Heart left ventricle (tissue), 16 donors: ENCODE measurements at regions of chrX and their contacts with region 1.

Region 1: GRCh38 chrX:19904778-19905367 is 17.5 kb upstream of the SH3KBP1 start:
- DNase-seq: peak in 1 of 5 donors; percentile 25
- ATAC-seq: peak in 3 of 4 donors; percentile 38 to 46 (median 44)
- H3K4me3 ChIP-seq: no peak overlapping the region
- H3K27ac ChIP-seq: no peak overlapping the region
- H3K4me1 ChIP-seq: no peaks in the 10 kb centered on the region
- H3K27me3 ChIP-seq: no peaks in the 10 kb centered on the region
- CTCF ChIP-seq: peak; percentile 48 to 70 (median 59)
- POLR2A ChIP-seq: no peak

Region 2: DNA sequence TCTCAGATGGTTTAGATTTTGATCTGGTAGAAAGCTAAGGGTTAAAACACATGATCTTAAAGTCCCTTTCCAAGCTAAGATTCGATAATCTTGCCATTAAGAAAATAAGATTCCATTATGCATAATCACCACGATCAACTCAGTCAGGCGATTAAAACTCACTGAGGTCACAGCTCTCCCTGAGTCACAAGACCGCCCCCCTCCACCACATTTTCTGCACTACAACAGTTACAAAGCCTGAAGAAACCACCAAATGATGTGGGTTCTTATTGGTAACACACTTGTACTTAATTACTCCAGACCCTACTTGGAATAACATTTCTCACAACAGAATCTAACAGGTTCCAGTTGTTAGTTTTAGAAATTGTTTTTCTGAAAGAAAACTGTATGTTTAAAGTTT is 80.3 kb before region 1 on chrX:
- intact Hi-C with region 1: no loop called
- DNase-seq: no peak
- ATAC-seq: no peak
- H3K4me3 ChIP-seq: no peak overlapping the region
- H3K27ac ChIP-seq: no peak overlapping the region
- H3K4me1 ChIP-seq: peaks cover 0 to 8% (median 0%) of the 10 kb centered on the region in 12 donors
- H3K27me3 ChIP-seq: no peaks in the 10 kb centered on the region
- CTCF ChIP-seq: no peak
- POLR2A ChIP-seq: no peak

Region 3: GRCh38 chrX:19990556-19991349 is 85.9 kb after region 1 on chrX and contains the start of gene BCLAF3:
- intact Hi-C with region 1: loop called in 9 of 10 experiments (anchors 2 to 10 kb)
- DNase-seq: peak; percentile 90 to 95 (median 90)
- ATAC-seq: peak; percentile 99 to 100 (median 100)
- H3K4me3 ChIP-seq: peak within 1 kb of the TSS; percentile 52 to 90 (median 77)
- H3K27ac ChIP-seq: peak within 1 kb of the TSS in 11 of 12 donors; percentile 44 to 80 (median 66)
- H3K4me1 ChIP-seq: peaks cover 0 to 12% (median 0%) of the 10 kb centered on the region in 12 donors
- H3K27me3 ChIP-seq: no peaks in the 10 kb centered on the region
- CTCF ChIP-seq: peak; percentile 65 to 86 (median 77)
- POLR2A ChIP-seq: no peak
- total RNA-seq, gene BCLAF3: 2.4 to 10.6 (median 7.8) TPM

Region 4: GRCh38 chrX:20066968-20067708 is 162.3 kb after region 1 on chrX:
- intact Hi-C with region 1: loop called in 4 of 10 experiments (anchors 10 kb)
- DNase-seq: no peak
- ATAC-seq: peak in 3 of 4 donors; percentile 29 to 61 (median 30)
- H3K4me3 ChIP-seq: no peak overlapping the region
- H3K27ac ChIP-seq: peak overlapping the region in 1 of 12 donors; percentile 15
- H3K4me1 ChIP-seq: peaks cover 0 to 11% (median 0%) of the 10 kb centered on the region in 12 donors
- H3K27me3 ChIP-seq: peaks cover 0 to 13% (median 0%) of the 10 kb centered on the region in 9 donors
- CTCF ChIP-seq: peak in 7 of 12 donors; percentile 7 to 35 (median 22)
- POLR2A ChIP-seq: no peak

Region 5: DNA sequence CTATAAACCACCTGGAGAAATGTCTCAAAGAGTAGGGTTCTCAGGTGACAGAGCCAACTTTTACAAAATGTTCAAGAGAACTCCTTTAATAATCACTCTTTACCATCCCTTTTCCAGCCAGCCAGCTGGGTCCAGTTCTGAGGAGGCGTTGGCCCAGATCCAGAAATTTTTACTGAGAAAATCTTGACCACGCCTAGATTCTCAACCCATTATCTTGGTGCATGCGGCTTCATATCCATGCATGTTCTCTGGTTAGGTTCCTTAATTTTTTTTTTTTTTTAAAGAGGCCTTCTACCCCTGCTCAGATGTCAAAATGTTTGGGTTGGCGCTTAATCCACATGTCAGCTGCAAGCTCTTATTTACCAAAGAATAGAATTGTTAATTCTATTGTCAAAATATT is 223.8 kb after region 1 on chrX:
- intact Hi-C with region 1: loop called in 9 of 10 experiments (anchors 5 to 10 kb)
- DNase-seq: no peak
- ATAC-seq: peak in 1 of 4 donors; percentile 49
- H3K4me3 ChIP-seq: no peak overlapping the region
- H3K27ac ChIP-seq: no peak overlapping the region
- H3K4me1 ChIP-seq: peaks cover 0 to 8% (median 0%) of the 10 kb centered on the region in 12 donors
- H3K27me3 ChIP-seq: no peaks in the 10 kb centered on the region
- CTCF ChIP-seq: no peak
- POLR2A ChIP-seq: no peak

Region 6: GRCh38 chrX:20141281-20142220 is 236.7 kb after region 1 on chrX and contains the start of gene EIF1AX:
- intact Hi-C with region 1: loop called in 1 of 10 experiments (anchors 10 kb)
- DNase-seq: peak; percentile 95 to 99 (median 97)
- ATAC-seq: peak; percentile 99 to 100 (median 100)
- H3K4me3 ChIP-seq: peak within 1 kb of the TSS; percentile 52 to 95 (median 80)
- H3K27ac ChIP-seq: peak within 1 kb of the TSS; percentile 47 to 93 (median 88)
- H3K4me1 ChIP-seq: peaks cover 3 to 38% (median 15%) of the 10 kb centered on the region in 12 donors
- H3K27me3 ChIP-seq: peaks cover 0 to 7% (median 0%) of the 10 kb centered on the region in 9 donors
- CTCF ChIP-seq: no peak
- POLR2A ChIP-seq: peak; percentile 96
- total RNA-seq, gene EIF1AX: 39.6 to 162 (median 58.7) TPM

Region 7: DNA sequence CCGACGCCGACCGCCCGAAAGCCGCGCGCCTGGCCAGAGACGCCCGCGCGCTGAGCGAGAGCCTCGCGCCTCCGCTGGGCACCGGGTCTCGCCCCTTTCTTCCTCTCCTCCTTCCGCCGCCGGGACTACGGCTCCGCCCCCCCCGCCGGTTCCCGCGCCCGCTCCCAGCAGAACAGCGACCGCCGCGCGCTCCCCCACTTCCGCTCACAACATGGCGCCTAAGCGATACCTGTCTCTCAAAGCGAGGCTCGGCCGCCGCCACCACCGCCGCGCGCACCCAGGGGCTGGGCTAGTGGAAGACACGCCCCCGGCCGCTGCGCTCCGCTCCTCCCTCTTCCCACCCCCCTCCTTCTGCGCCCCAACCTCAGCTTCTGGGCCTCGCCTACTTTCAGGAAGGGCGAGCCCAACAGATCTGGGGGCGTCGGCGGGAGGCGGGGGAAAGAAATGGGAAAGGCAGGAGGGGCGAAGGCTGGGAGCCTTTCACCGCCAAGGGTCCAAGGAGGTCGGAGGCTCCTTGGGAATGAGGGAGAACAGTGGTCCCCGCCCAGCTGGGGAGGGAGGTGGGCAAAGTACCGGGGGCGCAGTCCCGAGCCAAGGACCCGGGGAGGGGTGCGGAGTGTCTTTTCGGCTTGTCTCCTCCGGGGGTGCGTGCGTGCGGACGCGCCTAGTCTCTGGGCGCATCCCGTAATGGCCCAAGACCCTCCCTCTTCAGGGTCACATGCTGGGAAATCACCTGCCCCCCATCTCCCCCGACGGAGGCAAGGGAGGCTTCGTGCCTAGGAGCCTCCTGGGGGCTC is 362.1 kb after region 1 on chrX and contains the start of gene RPS6KA3:
- intact Hi-C with region 1: no loop called
- DNase-seq: peak; percentile 90 to 95 (median 92)
- ATAC-seq: peak; percentile 94 to 97 (median 96)
- H3K4me3 ChIP-seq: peak within 1 kb of the TSS; percentile 38 to 95 (median 69)
- H3K27ac ChIP-seq: peak within 1 kb of the TSS; percentile 26 to 89 (median 83)
- H3K4me1 ChIP-seq: peaks cover 0 to 30% (median 4%) of the 10 kb centered on the region in 12 donors
- H3K27me3 ChIP-seq: peaks cover 0 to 9% (median 0%) of the 10 kb centered on the region in 9 donors
- CTCF ChIP-seq: no peak
- POLR2A ChIP-seq: peak in 1 of 2 donors; percentile 76
- total RNA-seq, gene RPS6KA3: 28.1 to 52.3 (median 39.8) TPM